ENCODE measurements at regions of chr1 and their contacts with region 1.

Region 1: GRCh38 chr1:175572932-175573862 is 170.2 kb downstream of the TNR start:
- DNase-seq: peak; percentile 93

Region 2: DNA sequence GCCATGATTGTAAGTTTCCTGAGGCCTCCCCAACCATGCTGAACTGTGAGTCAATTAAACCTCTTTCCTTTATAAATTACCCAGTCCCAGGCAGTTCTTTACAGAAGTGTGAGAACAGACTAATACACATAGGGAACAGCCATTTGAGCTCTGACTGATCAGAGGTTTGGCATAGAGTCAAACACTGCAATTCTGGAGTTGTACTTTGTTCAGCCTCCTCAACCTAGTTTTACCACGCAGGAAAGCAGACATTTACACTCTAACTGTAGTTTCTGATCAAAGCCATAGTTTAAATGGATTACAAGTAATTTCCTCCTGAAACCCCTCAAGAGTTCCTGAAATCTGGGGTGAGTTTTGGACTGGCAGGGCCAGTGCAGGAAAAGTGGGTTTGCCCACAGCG is 48.0 kb before region 1 on chr1:
- in situ Hi-C with region 1: loop called (anchors 5 kb)
- DNase-seq: no peak

Region 3: GRCh38 chr1:175984813-175985212 is 411.6 kb after region 1 on chr1:
- in situ Hi-C with region 1: no loop called
- DNase-seq: no peak